GM12878 (cell line): ENCODE measurements at regions of chr3 and their contacts with region 1.

Region 1: DNA sequence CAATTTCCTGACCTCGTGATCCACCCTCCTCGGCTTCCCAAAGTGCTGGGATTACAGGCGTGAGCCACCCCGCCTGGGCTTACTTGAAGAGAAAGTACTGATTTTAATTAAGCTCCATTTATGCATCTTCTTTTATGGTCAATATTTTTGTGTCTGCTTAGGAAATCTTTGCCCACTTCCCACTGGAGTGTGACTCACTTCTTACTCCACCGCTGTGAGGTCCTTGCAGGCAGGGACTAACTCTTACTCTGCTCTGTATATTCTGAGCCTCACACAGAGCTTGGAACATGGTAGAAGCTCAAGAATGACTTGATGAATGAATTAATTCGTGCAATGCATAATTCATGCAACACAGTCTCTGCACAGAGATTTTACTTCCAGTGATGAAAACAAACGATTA is 2.9 kb upstream of the TM4SF19 start:
- DNase-seq: no peak
- ATAC-seq: no peak
- H3K4me3 ChIP-seq: no peak overlapping the region
- H3K27ac ChIP-seq: no peak overlapping the region
- H3K4me1 ChIP-seq: peaks cover 4% of the 10 kb centered on the region; the same call in 1 of the 2 replicates
- H3K27me3 ChIP-seq: no peaks in the 10 kb centered on the region
- CTCF ChIP-seq: no peak
- EP300 ChIP-seq: no peak
- POLR2A ChIP-seq: no peak
- RAD21 ChIP-seq: no peak

Region 2: DNA sequence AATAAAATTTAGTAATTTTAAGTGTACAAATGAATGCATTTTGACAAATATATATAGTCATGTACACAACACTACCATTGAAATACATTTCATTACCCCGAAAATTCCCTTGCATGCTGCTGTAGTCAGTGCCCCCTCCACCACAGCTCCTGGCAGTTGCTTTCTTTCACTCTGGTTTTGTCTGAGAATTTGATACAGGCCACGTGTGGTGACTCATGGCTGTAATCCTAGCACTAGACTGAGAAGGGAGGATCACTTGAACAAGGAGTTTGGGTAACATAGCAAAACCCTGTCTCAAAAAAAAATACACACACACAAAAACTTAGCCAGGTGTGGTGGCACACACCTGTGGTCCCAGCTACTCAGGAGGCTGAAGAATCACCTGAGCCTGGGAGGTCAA is 324.7 kb before region 1 on chr3:
- CTCF ChIA-PET with region 1: no interaction called
- POLR2A ChIA-PET with region 1: no interaction called
- RAD21 ChIA-PET with region 1: no interaction called
- SMC1A ChIA-PET with region 1: no interaction called
- in situ Hi-C with region 1: no loop called
- intact Hi-C with region 1: no loop called
- DNase-seq: no peak
- ATAC-seq: no peak
- H3K4me3 ChIP-seq: no peak overlapping the region
- H3K27ac ChIP-seq: no peak overlapping the region
- H3K4me1 ChIP-seq: no peaks in the 10 kb centered on the region
- H3K27me3 ChIP-seq: no peaks in the 10 kb centered on the region
- CTCF ChIP-seq: no peak
- EP300 ChIP-seq: no peak
- POLR2A ChIP-seq: no peak
- RAD21 ChIP-seq: no peak

Region 3: DNA sequence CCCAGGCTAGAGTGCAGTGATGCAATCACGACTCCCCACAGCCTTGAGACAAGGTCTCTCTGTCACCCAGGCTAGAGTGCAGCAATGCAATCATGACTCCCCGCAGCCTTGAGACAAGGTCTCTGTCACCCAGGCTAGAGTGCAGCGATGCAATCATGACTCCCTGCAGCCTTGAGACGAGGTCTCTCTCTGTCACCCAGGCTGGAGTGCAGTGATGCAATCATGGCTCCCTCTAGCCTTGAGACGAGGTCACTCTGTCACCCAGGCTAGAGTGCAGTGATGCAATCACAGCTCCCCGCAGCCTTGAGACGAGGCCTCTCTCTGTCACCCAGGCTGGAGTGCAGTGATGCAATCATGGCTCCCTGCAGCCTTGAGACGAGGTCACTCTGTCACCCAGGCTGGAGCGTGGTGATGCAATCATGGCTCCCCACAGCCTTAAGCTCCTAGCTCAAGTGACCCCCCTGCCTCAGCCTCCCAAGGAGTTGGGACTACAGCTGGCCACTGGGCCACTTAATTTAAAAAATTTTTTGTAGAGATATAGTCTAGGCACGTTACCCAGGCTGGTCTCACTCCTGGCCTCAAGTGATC is 285.4 kb before region 1 on chr3:
- CTCF ChIA-PET with region 1: no interaction called
- POLR2A ChIA-PET with region 1: no interaction called
- RAD21 ChIA-PET with region 1: no interaction called
- SMC1A ChIA-PET with region 1: no interaction called
- in situ Hi-C with region 1: no loop called
- intact Hi-C with region 1: no loop called
- DNase-seq: no peak
- ATAC-seq: no peak; the same call in 1 of the 3 replicates
- H3K4me3 ChIP-seq: no peak overlapping the region
- H3K27ac ChIP-seq: no peak overlapping the region
- H3K4me1 ChIP-seq: no peaks in the 10 kb centered on the region
- H3K27me3 ChIP-seq: no peaks in the 10 kb centered on the region
- CTCF ChIP-seq: no peak
- EP300 ChIP-seq: no peak
- POLR2A ChIP-seq: no peak
- RAD21 ChIP-seq: no peak

Region 4: DNA sequence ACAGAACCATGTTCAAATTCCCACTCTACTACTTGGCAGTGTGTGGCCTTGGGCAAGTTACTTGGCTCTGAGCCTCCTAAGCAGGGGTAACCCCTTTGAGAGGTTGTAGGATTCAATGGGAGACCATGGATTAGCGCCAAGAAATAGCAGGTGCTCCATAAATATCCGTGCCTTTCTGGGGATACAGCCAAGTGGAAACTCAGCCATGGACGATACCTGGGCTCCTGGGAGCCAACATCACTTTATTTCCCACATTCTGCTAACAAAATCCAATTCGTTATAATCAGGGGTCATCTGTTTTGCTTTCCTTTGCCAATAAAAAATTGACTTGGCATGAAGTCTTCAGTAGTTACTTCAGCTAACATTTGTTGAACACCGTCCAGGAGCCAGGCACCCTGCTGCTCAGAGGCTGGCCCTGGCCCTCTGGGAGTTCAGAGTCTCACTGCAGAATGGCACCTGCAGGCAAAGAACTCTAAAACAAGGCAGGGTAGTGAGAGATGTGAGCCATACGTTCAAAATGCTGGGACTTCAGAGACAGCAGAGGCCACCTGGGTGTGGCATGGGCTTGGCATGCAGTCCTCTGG is 172.2 kb before region 1 on chr3:
- CTCF ChIA-PET with region 1: no interaction called
- POLR2A ChIA-PET with region 1: no interaction called
- RAD21 ChIA-PET with region 1: no interaction called
- SMC1A ChIA-PET with region 1: no interaction called
- in situ Hi-C with region 1: no loop called
- intact Hi-C with region 1: no loop called
- DNase-seq: no peak
- ATAC-seq: no peak
- H3K4me3 ChIP-seq: no peak overlapping the region
- H3K27ac ChIP-seq: no peak overlapping the region
- H3K4me1 ChIP-seq: no peaks in the 10 kb centered on the region
- H3K27me3 ChIP-seq: no peaks in the 10 kb centered on the region
- CTCF ChIP-seq: no peak
- EP300 ChIP-seq: no peak
- POLR2A ChIP-seq: no peak
- RAD21 ChIP-seq: no peak

Region 5: GRCh38 chr3:196207833-196208607 is 133.1 kb before region 1 on chr3:
- CTCF ChIA-PET with region 1: no interaction called
- POLR2A ChIA-PET with region 1: no interaction called
- RAD21 ChIA-PET with region 1: no interaction called
- SMC1A ChIA-PET with region 1: no interaction called
- in situ Hi-C with region 1: no loop called
- intact Hi-C with region 1: no loop called
- DNase-seq: no peak
- ATAC-seq: peak; percentile 56
- H3K4me3 ChIP-seq: peak overlapping the region; percentile 67; the same call in 1 of the 2 replicates
- H3K27ac ChIP-seq: no peak overlapping the region
- H3K4me1 ChIP-seq: peaks cover 6% of the 10 kb centered on the region
- H3K27me3 ChIP-seq: no peaks in the 10 kb centered on the region
- CTCF ChIP-seq: no peak
- EP300 ChIP-seq: no peak
- POLR2A ChIP-seq: no peak
- RAD21 ChIP-seq: no peak

Region 6: DNA sequence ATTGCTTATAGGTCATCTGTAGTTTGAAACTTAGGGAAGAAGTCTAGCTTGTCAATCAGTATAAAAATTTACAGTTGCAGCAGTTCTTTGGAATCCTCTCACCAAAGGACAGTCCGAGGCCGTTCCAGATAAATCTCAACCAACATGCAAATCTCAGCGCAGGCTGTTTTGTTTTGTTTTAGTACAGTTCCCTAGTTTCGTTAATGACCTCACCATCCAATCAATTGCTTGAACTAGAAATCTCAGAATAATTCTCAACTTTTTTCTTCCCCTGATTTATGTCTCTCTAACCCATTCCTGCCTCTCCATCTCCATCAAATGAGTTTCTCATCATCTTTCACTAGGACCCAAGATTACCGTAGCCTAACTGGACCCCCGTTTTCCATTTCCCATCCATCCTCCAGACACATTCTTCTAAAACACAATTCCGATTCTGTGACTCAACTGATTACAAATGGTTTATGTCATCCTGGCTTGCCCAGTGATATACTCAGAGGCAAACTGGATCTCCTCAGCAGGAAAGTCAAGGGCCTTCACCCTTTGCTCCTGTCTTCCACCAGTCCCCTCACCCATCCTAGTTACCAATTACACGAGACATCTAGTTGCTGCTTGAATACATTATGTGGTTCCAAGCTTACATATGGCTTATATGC is 172.7 kb after region 1 on chr3:
- CTCF ChIA-PET with region 1: no interaction called
- POLR2A ChIA-PET with region 1: interaction called, 11 read pairs
- RAD21 ChIA-PET with region 1: no interaction called
- SMC1A ChIA-PET with region 1: no interaction called
- in situ Hi-C with region 1: no loop called
- intact Hi-C with region 1: no loop called
- DNase-seq: no peak
- ATAC-seq: no peak
- H3K4me3 ChIP-seq: no peak overlapping the region
- H3K27ac ChIP-seq: no peak overlapping the region
- H3K4me1 ChIP-seq: no peaks in the 10 kb centered on the region
- H3K27me3 ChIP-seq: no peaks in the 10 kb centered on the region
- CTCF ChIP-seq: no peak
- EP300 ChIP-seq: no peak
- POLR2A ChIP-seq: no peak
- RAD21 ChIP-seq: no peak